Mammary epithelial cell (primary cell): ENCODE measurements at regions of chr3 and their contacts with region 1.

Region 1: DNA sequence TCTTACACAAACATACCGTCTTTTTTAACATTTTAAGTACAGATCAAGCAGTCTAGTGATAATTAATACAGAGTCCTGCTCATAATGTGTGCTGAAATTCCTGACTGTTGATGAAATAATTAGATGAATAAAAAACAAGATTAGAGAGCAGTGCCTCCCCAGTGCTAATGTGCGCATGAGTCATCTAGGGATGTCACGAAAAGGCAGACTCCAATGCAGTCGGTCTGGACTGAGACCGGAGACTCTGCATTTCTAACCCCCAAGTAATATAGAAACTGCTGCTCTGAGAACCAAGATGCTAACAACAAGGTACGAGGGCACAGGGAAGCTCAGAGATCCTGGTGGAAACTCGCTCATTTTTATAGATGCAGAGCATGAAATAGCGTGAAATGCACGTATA is 61.4 kb downstream of the COL8A1 start:
- DNase-seq: no peak
- H3K4me3 ChIP-seq: no peak overlapping the region
- H3K27ac ChIP-seq: no peak overlapping the region
- H3K4me1 ChIP-seq: no peaks in the 10 kb centered on the region
- H3K27me3 ChIP-seq: no peaks in the 10 kb centered on the region
- CTCF ChIP-seq: no peak

Region 2: GRCh38 chr3:98630416-98630815 is 1069.4 kb before region 1 on chr3:
- CTCF ChIA-PET with region 1: no interaction called
- dilution Hi-C with region 1: no loop called
- in situ Hi-C with region 1: no loop called
- intact Hi-C with region 1: loop called (anchors 5 kb)
- DNase-seq: no peak
- H3K4me3 ChIP-seq: no peak overlapping the region
- H3K27ac ChIP-seq: no peak overlapping the region
- H3K4me1 ChIP-seq: no peaks in the 10 kb centered on the region
- H3K27me3 ChIP-seq: no peaks in the 10 kb centered on the region
- CTCF ChIP-seq: no peak

Region 3: DNA sequence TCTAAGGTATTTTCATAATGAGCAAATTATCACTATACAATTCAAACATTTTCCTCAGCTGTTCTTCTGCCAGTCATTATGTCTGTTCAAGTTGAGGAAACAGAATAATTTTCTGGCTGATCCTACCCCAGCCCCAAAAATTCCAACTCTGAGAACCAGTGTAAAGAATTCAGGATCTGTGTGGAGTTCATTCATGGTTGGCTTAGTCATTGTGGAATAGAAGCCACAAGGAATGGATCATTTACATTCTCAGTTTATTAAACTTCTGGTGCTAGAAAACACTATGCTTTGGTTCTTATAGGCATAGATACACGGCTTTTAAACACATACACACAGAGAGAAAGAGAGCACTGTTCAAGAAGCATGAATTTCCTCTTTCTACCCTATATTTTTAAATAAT is 252.5 kb after region 1 on chr3:
- CTCF ChIA-PET with region 1: no interaction called
- dilution Hi-C with region 1: no loop called
- in situ Hi-C with region 1: no loop called
- intact Hi-C with region 1: no loop called
- DNase-seq: peak; percentile 51
- H3K4me3 ChIP-seq: no peak overlapping the region
- H3K27ac ChIP-seq: peak overlapping the region; percentile 5
- H3K4me1 ChIP-seq: peaks cover 8% of the 10 kb centered on the region
- H3K27me3 ChIP-seq: no peaks in the 10 kb centered on the region
- CTCF ChIP-seq: no peak